H1 (cell line): ENCODE measurements at regions of chr5 and their contacts with region 1.

Region 1: GRCh38 chr5:169161022-169161680 is 139.8 kb downstream of the SLIT3 start:
- DNase-seq: no peak
- H3K4me3 ChIP-seq: no peak overlapping the region
- H3K27ac ChIP-seq: no peak overlapping the region
- H3K4me1 ChIP-seq: peaks cover 0 to 10% (median 3%) of the 10 kb centered on the region in 4 experiments; a peak in 4 of 7 replicates
- H3K27me3 ChIP-seq: no peaks in the 10 kb centered on the region
- CTCF ChIP-seq: no peak
- EP300 ChIP-seq: no peak
- POLR2A ChIP-seq: no peak
- RAD21 ChIP-seq: no peak

Region 2: DNA sequence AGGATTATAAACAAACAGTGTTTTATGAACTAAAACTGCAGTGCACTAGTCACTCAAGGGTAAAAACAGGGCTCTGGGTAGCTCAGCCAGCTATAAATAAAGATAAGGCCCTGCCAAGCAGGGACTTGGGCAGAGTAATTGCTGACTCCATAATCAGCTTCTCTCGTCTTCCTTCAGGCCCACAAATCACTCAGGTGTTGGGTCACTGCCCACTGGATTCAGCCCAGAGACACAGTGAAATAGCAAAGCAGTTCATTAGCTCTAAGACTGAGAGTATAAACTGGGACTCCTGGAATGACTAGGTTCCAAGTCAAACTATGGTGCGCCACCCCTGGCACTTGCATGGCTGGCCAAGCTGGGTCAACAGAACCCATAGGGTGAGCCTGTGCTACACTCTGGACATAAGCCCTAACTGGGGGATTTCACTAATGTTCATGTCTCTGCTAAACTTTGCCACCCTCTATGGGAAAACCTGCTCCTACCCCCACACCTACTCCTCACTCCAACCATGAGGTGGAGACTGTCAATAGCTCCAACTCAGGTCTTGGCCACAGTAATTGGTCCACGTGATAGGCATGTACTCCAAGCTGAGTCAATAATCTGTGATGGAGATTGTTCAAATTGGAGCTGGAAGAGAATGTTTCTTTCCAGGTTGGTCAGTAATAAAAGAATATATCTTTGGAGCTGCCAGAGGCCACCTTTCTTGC is 18.7 kb before region 1 on chr5:
- CTCF ChIA-PET with region 1: interaction called, 15 read pairs
- POLR2A ChIA-PET with region 1: no interaction called
- DNase-seq: no peak
- H3K4me3 ChIP-seq: no peak overlapping the region
- H3K27ac ChIP-seq: no peak overlapping the region
- H3K4me1 ChIP-seq: no peaks in the 10 kb centered on the region
- H3K27me3 ChIP-seq: no peaks in the 10 kb centered on the region
- CTCF ChIP-seq: no peak
- EP300 ChIP-seq: no peak
- POLR2A ChIP-seq: no peak
- RAD21 ChIP-seq: no peak

Region 3: GRCh38 chr5:169149317-169149716 is 11.8 kb before region 1 on chr5:
- CTCF ChIA-PET with region 1: interaction called, 15 read pairs
- POLR2A ChIA-PET with region 1: no interaction called
- DNase-seq: no peak
- H3K4me3 ChIP-seq: no peak overlapping the region
- H3K27ac ChIP-seq: no peak overlapping the region
- H3K4me1 ChIP-seq: peaks cover 0 to 5% (median 3%) of the 10 kb centered on the region in 4 experiments; a peak in 2 of 7 replicates
- H3K27me3 ChIP-seq: no peaks in the 10 kb centered on the region
- CTCF ChIP-seq: peak; percentile 7 to 73 (median 56)
- EP300 ChIP-seq: no peak
- POLR2A ChIP-seq: no peak
- RAD21 ChIP-seq: peak; percentile 56 to 72

Region 4: GRCh38 chr5:169173372-169173771 is 12.2 kb after region 1 on chr5:
- CTCF ChIA-PET with region 1: interaction called, 36 read pairs
- POLR2A ChIA-PET with region 1: no interaction called
- DNase-seq: no peak
- H3K4me3 ChIP-seq: no peak overlapping the region
- H3K27ac ChIP-seq: no peak overlapping the region
- H3K4me1 ChIP-seq: peaks cover 0 to 5% (median 2%) of the 10 kb centered on the region in 4 experiments; a peak in 3 of 7 replicates
- H3K27me3 ChIP-seq: no peaks in the 10 kb centered on the region
- CTCF ChIP-seq: no peak
- EP300 ChIP-seq: no peak
- POLR2A ChIP-seq: no peak
- RAD21 ChIP-seq: no peak